Activated CD4-positive, alpha-beta memory T cell treated with anti-CD3 and anti-CD28 coated beads, Interleukin-2, amount 10 ng/mL, durations not matched to agents 7 days and 5 days (primary cell): ENCODE measurements at regions of chr21 and their contacts with region 1.

Region 1: GRCh38 chr21:44618504-44618903 is 6.6 kb downstream of the KRTAP10-8 start:
- DNase-seq: no peak
- H3K4me3 Mint-ChIP-seq: peak overlapping the region; percentile 42
- H3K27ac Mint-ChIP-seq: peak overlapping the region; percentile 73
- H3K4me1 Mint-ChIP-seq: peaks cover 33% of the 10 kb centered on the region
- H3K27me3 Mint-ChIP-seq: peaks cover 4% of the 10 kb centered on the region

Region 2: GRCh38 chr21:44271558-44272283 is 346.8 kb before region 1 on chr21:
- CTCF ChIA-PET with region 1: interaction called, 10 read pairs
- POLR2A ChIA-PET with region 1: no interaction called
- DNase-seq: no peak
- H3K4me3 Mint-ChIP-seq: no peak overlapping the region
- H3K27ac Mint-ChIP-seq: no peak overlapping the region
- H3K4me1 Mint-ChIP-seq: no peaks in the 10 kb centered on the region
- H3K27me3 Mint-ChIP-seq: peaks cover 16% of the 10 kb centered on the region

Region 3: GRCh38 chr21:44657635-44658540 is 39.4 kb after region 1 on chr21 and contains the start of gene KRTAP12-3:
- CTCF ChIA-PET with region 1: interaction called, 6 read pairs
- POLR2A ChIA-PET with region 1: interaction called, 18 read pairs
- DNase-seq: peak; percentile 67
- H3K4me3 Mint-ChIP-seq: peak within 1 kb of the TSS; percentile 40
- H3K27ac Mint-ChIP-seq: peak within 1 kb of the TSS; percentile 93
- H3K4me1 Mint-ChIP-seq: peaks cover 64% of the 10 kb centered on the region
- H3K27me3 Mint-ChIP-seq: peaks cover 8% of the 10 kb centered on the region
- total RNA-seq, gene KRTAP12-3: not detected

Region 4: DNA sequence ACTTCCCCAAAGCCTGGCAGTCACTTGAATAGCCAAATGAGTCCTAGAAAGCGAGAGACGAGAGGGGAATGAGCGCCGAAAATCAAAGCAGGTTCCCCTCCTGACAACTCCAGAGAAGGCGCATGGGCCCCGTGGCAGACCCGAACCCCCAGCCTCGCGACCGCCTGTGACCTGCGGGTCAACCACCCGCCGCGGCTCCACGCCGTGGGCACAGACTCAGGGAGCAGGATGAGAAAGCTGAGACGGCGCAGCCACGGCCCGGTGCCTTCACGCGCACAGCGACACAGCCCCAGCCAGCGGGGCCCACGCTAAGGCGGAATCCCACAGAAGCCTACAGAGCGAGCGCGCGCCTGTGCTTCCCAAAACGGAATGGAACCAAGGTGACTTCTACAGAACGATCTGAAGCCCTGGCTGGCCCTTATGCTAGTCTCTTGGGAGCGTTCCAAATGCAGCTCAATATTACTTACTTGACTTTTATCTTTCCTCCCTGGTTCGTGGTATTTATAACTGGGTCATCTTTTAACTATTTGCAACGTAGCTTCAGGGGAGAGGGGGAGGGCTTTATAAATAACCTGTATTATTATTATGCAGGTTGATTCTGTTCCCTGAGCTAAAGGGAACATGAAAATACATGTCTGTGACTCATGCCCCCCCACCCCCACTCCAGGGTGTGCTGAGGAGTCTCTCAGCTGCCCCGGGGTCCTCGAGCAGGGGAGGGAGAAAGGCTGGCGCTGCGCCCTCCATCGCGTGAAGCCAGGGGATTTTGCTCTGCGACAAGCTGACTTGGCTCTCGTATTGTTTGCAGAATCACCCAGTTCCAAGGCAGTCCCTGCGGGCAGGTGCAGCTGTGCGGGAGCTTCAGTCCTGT is 91.2 kb after region 1 on chr21:
- CTCF ChIA-PET with region 1: no interaction called
- POLR2A ChIA-PET with region 1: no interaction called
- DNase-seq: no peak
- H3K4me3 Mint-ChIP-seq: no peak overlapping the region
- H3K27ac Mint-ChIP-seq: no peak overlapping the region
- H3K4me1 Mint-ChIP-seq: peaks cover 5% of the 10 kb centered on the region
- H3K27me3 Mint-ChIP-seq: peaks cover 89% of the 10 kb centered on the region